ENCODE measurements at regions of chr6 and their contacts with region 1.

Region 1: GRCh38 chr6:7129784-7130569 is 22.2 kb downstream of the RREB1 start:
- DNase-seq: no peak
- CTCF ChIP-seq: no peak

Region 2: GRCh38 chr6:7108964-7109836 is 20.8 kb before region 1 on chr6:
- CTCF ChIA-PET with region 1: interaction called, 14 read pairs
- POLR2A ChIA-PET with region 1: no interaction called
- DNase-seq: peak; percentile 55
- CTCF ChIP-seq: no peak

Region 3: DNA sequence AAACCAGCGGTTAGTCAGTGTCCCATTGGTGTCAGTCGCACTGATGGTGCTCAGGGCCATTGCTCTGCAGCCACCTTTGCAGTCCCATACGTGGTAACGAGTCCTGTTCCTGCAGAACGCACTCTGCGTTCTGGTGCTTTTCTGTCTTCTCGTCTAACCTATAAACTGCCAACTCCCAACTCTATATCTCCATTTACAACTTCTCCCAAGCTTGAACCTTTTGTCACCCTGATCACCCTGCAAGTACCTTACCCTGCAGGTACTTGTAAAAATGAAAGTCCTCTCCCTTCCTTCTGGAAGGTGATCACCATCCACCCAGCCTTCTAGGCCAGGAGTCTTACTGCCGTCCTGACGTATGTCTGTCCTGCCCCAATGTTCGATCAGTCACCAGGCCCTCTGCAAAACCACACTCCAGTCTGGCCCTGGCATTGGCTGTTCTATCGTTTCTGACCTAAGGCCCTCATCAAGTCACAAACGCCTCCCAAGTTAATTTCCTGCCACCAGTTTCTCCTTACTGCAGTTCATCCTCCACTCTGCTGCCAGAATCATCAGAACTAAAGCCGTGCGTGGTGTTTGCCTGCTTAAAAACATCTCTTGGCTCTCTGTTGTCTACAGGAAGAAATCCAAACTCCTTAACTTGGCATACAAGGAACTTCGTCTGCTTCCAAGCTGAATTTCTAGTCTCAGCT is 14.3 kb before region 1 on chr6:
- CTCF ChIA-PET with region 1: interaction called, 14 read pairs
- POLR2A ChIA-PET with region 1: interaction called, 4 read pairs
- DNase-seq: no peak
- CTCF ChIP-seq: no peak

Measured in GM10248 (cell line).